ENCODE measurements at regions of chr13 and their contacts with region 1.

Region 1: GRCh38 chr13:71768881-71769280 is 98.1 kb downstream of the DACH1 start:
- DNase-seq: no peak
- CTCF ChIP-seq: no peak

Region 2: DNA sequence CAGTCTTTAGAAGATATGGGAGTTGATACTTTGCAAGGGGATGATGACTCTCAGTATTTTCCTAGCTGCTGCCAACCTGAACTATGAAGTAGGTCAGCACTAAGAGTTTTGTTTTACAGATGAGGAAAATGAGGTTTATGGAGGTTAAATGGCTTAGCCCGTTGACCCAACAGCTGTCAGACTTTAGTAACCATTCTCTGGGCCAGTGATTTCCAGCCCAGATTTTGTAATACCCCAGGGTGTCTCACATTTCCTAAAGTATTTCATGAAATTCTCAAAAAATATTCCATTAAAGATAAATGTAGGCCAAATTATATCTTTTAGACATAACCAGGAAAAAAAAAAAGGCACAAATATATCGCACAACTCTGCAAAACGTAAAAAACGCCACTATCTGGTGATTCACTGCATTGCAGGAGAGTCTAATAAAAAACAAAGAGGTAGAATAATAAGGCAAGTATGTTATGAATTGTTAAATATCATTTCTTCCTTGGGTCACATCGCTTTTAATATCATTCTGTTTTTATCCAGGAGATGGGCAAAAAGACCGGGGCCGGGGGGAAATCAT is 14.4 kb before region 1 on chr13:
- CTCF ChIA-PET with region 1: interaction called, 17 read pairs
- POLR2A ChIA-PET with region 1: no interaction called
- DNase-seq: no peak
- CTCF ChIP-seq: no peak